ENCODE measurements at regions of chr3 and their contacts with region 1.

Region 1: DNA sequence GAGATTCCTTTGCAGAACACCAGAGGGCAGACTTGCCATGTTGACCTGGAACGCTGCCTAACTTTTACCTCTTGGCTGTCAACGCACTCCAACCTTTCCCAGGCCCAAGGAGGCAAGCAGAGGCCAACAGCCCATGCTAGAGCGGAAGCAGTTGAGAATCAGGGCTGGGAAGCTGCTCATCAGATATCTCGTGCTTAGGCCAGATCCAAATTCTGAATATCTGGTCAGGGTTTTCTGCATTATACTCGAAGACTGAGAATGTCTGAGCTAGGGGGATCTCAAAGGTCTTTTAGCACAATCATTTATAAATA is 2.5 kb downstream of the XIRP1 start:
- DNase-seq: peak in 3 of 5 donors; percentile 75 to 84 (median 80)
- H3K4me3 ChIP-seq: no peak overlapping the region
- H3K27ac ChIP-seq: no peak overlapping the region
- H3K4me1 ChIP-seq: peaks cover 0 to 4% (median 0%) of the 10 kb centered on the region in 3 donors
- H3K27me3 ChIP-seq: no peaks in the 10 kb centered on the region
- CTCF ChIP-seq: peak; percentile 88

Region 2: GRCh38 chr3:39279745-39280517 is 90.0 kb after region 1 on chr3 and contains the start of gene CX3CR1:
- intact Hi-C with region 1: loop called (anchors 5 kb)
- DNase-seq: no peak
- H3K4me3 ChIP-seq: peak within 1 kb of the TSS in 1 of 3 donors; percentile 29
- H3K27ac ChIP-seq: no peak within 1 kb of the TSS
- H3K4me1 ChIP-seq: no peaks in the 10 kb centered on the region
- H3K27me3 ChIP-seq: no peaks in the 10 kb centered on the region
- CTCF ChIP-seq: no peak
- total RNA-seq, gene CX3CR1: 4.4 TPM